Cardiac septum (tissue), 1 donor: ENCODE measurements at regions of chr4 and their contacts with region 1.

Region 1: GRCh38 chr4:85391589-85392410 is 83.2 kb upstream of the ARHGAP24 start:
- DNase-seq: no peak

Region 2: GRCh38 chr4:85658766-85659439 is 267.1 kb after region 1 on chr4:
- intact Hi-C with region 1: loop called (anchors 10 kb)
- DNase-seq: no peak